ENCODE measurements at regions of chr22 and their contacts with region 1.

Region 1: GRCh38 chr22:43031617-43032016 is 16.7 kb upstream of the PACSIN2 start:
- DNase-seq: no peak
- H3K4me3 ChIP-seq: no peak overlapping the region
- H3K27ac ChIP-seq: no peak overlapping the region
- H3K27me3 ChIP-seq: no peaks in the 10 kb centered on the region
- CTCF ChIP-seq: no peak

Region 2: DNA sequence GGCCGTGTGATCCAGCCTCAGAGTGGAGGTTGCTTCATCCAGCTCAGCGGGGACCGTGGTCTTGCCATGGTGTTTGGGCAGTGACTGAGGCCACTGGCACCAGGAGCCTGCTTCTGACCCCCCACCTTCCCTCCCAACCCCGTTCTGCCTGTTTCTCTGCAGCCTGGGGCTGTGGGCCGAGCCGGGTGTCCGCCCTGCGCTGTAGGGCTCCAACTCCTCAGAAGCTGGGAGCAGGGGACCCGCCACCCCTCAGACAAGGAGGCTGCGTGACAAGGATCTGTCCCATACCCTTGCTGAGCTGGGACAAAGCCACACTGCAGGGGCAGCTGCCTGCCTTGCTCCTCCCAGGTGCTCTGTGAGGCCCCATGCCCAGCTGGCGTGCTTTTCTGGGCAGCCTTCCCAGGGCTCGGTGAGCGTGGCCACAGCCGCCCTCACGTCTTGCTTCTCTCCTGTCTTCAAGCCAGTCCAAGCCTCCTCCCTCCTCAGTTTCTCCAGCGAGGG is 162.8 kb before region 1 on chr22:
- intact Hi-C with region 1: loop called in 1 of 2 experiments (anchors 5 kb)
- DNase-seq: peak in 9 of 10 donors; percentile 42 to 88 (median 71)
- H3K4me3 ChIP-seq: no peak overlapping the region
- H3K27ac ChIP-seq: peak overlapping the region in 17 of 59 donors; percentile 5 to 66 (median 34)
- H3K27me3 ChIP-seq: no peaks in the 10 kb centered on the region
- CTCF ChIP-seq: peak in 1 of 56 donors; percentile 9

Region 3: DNA sequence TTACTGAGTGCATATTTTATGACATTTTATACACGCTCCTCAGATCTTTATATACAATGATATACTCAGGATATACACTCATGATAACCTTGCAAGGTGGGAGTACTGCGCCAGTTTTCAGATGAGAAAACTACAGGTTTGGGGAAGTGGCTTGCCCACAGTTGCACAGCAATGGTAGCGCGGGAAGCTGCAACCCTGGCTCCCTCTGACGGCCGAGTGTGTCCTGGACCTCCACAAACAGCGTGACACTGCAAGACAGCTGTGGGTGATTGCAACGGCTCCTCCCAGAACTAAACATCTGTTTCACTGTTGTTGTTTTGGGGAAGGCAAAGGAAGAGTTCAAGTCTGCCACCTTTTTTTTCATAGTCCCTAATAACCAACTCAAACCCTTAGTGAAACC is 63.7 kb before region 1 on chr22:
- intact Hi-C with region 1: no loop called
- DNase-seq: peak in 1 of 10 donors; percentile 36
- H3K4me3 ChIP-seq: no peak overlapping the region
- H3K27ac ChIP-seq: no peak overlapping the region
- H3K27me3 ChIP-seq: no peaks in the 10 kb centered on the region
- CTCF ChIP-seq: peak in 24 of 56 donors; percentile 9 to 39 (median 19)

Region 4: DNA sequence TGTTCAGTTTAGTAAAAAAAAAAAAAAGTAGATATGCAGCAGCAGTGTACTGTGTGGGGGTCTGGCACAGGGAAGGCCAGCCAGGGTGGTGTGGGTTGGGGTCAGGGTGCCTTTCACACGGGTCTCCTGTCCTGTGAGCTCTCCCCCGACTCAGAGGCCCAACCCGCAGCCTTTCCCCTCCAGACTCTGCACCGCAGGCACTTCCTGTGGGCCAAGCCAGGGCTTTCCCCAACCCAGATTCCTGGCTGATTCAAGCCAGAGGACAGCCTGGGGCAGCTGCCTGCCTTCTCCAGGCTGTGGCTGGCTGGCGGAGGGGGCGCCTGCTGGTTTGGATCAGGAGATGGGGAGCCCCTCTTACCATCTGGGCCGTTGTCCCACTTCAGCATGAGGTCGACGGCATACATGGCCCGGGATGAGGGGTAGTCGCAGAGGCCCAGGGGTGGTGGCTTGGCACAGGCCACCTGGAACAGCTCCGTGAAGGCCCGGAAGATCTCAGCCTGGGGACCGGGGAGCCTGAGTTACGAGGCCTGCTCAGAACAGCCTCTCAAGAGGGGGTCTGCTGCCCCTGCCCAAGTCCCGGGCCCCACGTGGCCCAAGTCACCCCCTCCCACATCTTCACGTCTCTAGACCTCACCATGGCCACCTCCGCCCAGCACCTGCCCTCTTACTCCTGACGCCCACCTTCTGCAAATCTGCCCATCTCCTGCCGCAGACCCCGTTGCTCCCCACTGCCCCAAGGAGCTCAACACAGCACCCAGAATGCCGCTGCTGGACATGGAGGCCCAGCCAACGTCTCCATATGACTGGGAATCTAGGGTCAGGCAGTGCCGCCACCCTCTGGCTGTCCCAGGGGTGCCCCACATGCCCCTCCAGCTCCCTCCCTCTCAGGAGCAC is 137.0 kb after region 1 on chr22:
- intact Hi-C with region 1: no loop called
- DNase-seq: no peak
- H3K4me3 ChIP-seq: no peak overlapping the region
- H3K27ac ChIP-seq: no peak overlapping the region
- H3K27me3 ChIP-seq: no peaks in the 10 kb centered on the region
- CTCF ChIP-seq: no peak

Region 5: GRCh38 chr22:43848366-43849171 is 817.0 kb after region 1 on chr22:
- intact Hi-C with region 1: no loop called
- DNase-seq: peak in 7 of 10 donors; percentile 19 to 51 (median 48)
- H3K4me3 ChIP-seq: no peak overlapping the region
- H3K27ac ChIP-seq: peak overlapping the region in 3 of 59 donors; percentile 21 to 51 (median 35)
- H3K27me3 ChIP-seq: peaks cover 0 to 4% (median 0%) of the 10 kb centered on the region in 45 donors
- CTCF ChIP-seq: peak in 36 of 56 donors; percentile 3 to 46 (median 29)